HEK293 (cell line): ENCODE measurements at regions of chr16 and their contacts with region 1.

Region 1: GRCh38 chr16:72832621-72833248 is 215.2 kb downstream of the ZFHX3 start:
- H3K4me3 ChIP-seq: no peak overlapping the region
- H3K27ac ChIP-seq: no peak overlapping the region
- H3K4me1 ChIP-seq: peaks cover 5% of the 10 kb centered on the region; the same call in 1 of the 2 replicates
- CTCF ChIP-seq: peak; percentile 80

Region 2: GRCh38 chr16:72612256-72612655 is 220.5 kb before region 1 on chr16:
- CTCF ChIA-PET with region 1: no interaction called
- POLR2A ChIA-PET with region 1: no interaction called
- H3K4me3 ChIP-seq: no peak overlapping the region
- H3K27ac ChIP-seq: no peak overlapping the region
- H3K4me1 ChIP-seq: 0 out of 2 replicates have a peak, but pooled peaks cover 2% of the 10 kb centered on the region
- CTCF ChIP-seq: no peak

Region 3: GRCh38 chr16:72818236-72818845 is 14.4 kb before region 1 on chr16:
- CTCF ChIA-PET with region 1: interaction called, 20 read pairs
- POLR2A ChIA-PET with region 1: no interaction called
- H3K4me3 ChIP-seq: no peak overlapping the region
- H3K27ac ChIP-seq: no peak overlapping the region
- H3K4me1 ChIP-seq: no peaks in the 10 kb centered on the region
- CTCF ChIP-seq: no peak

Region 4: GRCh38 chr16:72856797-72857196 is 24.1 kb after region 1 on chr16:
- CTCF ChIA-PET with region 1: interaction called, 21 read pairs
- POLR2A ChIA-PET with region 1: no interaction called
- H3K4me3 ChIP-seq: no peak overlapping the region
- H3K27ac ChIP-seq: no peak overlapping the region
- H3K4me1 ChIP-seq: no peaks in the 10 kb centered on the region
- CTCF ChIP-seq: peak; percentile 45; the same call in 1 of the 2 replicates

Region 5: GRCh38 chr16:72961121-72961763 is 128.5 kb after region 1 on chr16:
- CTCF ChIA-PET with region 1: interaction called, 14 read pairs
- POLR2A ChIA-PET with region 1: no interaction called
- H3K4me3 ChIP-seq: no peak overlapping the region
- H3K27ac ChIP-seq: no peak overlapping the region
- H3K4me1 ChIP-seq: no peaks in the 10 kb centered on the region; the same call in 1 of the 2 replicates
- CTCF ChIP-seq: peak; percentile 23; the same call in 1 of the 2 replicates

Region 6: DNA sequence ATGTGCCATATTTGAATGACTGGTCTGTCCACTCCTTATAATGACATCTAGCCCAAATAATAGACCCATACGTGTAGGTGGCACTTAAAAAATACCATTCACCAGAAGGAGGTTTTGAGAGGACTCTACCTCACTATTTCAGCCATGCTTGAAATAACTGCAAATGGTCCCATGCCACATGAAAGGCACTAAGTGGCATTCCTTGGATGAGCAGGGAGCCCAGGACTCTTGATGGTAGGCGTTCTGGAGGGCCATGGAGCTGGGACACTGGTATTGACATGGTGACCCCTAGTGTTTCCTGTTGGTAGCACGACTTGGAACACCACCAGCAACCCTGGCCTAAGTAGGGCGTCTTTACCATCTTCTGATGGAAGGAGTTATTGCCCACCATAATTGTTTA is 363.9 kb after region 1 on chr16:
- CTCF ChIA-PET with region 1: interaction called, 16 read pairs
- POLR2A ChIA-PET with region 1: no interaction called
- H3K4me3 ChIP-seq: no peak overlapping the region
- H3K27ac ChIP-seq: no peak overlapping the region
- H3K4me1 ChIP-seq: no peaks in the 10 kb centered on the region
- CTCF ChIP-seq: peak; percentile 65